ENCODE measurements at regions of chr2 and their contacts with region 1.

Region 1: GRCh38 chr2:216519154-216519762 is 20.6 kb downstream of the RPL37A start:
- H3K4me3 ChIP-seq: no peak overlapping the region
- H3K27ac ChIP-seq: no peak overlapping the region
- H3K4me1 ChIP-seq: no peaks in the 10 kb centered on the region
- CTCF ChIP-seq: peak; percentile 56; the same call in 1 of the 2 replicates

Region 2: DNA sequence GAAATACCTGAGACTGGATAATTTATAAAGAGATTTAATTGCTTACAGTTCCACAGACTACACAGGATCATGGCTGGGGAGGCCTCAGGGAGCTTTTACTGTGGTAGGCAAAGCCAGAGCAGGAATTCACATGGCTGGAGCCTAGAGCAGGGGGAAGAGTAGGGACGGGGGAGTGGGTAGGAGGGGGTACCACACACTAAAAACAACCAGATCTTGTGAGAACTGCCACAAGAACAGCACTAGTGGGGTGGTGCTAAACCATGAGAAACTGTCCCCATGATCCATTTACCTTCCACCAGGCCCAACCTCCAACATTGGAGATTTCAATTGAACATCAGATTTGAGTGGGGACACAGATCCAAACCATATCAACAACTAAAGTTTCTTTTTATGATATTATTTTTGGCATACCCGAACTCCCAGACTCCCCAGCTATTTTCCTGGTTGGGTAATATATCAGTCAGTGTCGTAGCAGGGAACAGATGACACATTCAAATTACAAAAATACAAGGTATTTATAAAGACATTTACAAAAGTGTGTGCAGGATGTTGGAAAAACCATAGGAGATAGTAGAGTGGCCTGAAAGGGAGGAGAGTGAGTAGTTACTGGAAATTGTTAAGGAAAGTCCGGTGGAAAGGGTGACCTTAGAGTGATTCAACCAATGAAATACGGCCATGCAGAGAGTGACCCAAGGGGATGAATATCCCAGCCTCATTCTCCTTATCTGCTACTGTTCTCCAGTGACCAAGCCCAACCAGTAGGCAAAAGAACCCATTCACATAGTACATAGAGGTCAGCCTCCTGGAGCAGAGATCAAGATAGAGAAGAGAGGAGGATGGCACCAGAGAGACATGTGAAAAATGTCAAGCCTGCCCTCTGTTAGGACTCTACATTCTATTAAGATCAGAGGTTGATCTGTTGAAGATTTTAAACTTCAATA is 11.8 kb before region 1 on chr2:
- CTCF ChIA-PET with region 1: interaction called, 12 read pairs
- POLR2A ChIA-PET with region 1: interaction called, 7 read pairs
- H3K4me3 ChIP-seq: no peak overlapping the region
- H3K27ac ChIP-seq: no peak overlapping the region
- H3K4me1 ChIP-seq: no peaks in the 10 kb centered on the region
- CTCF ChIP-seq: no peak

Region 3: GRCh38 chr2:216533609-216534008 is 14.4 kb after region 1 on chr2:
- CTCF ChIA-PET with region 1: interaction called, 22 read pairs
- POLR2A ChIA-PET with region 1: no interaction called
- H3K4me3 ChIP-seq: no peak overlapping the region
- H3K27ac ChIP-seq: no peak overlapping the region
- H3K4me1 ChIP-seq: peaks cover 5% of the 10 kb centered on the region; the same call in 1 of the 2 replicates
- CTCF ChIP-seq: no peak

Region 4: GRCh38 chr2:216648105-216648504 is 128.8 kb after region 1 on chr2:
- CTCF ChIA-PET with region 1: interaction called, 14 read pairs
- POLR2A ChIA-PET with region 1: no interaction called
- H3K4me3 ChIP-seq: no peak overlapping the region
- H3K27ac ChIP-seq: no peak overlapping the region
- H3K4me1 ChIP-seq: no peaks in the 10 kb centered on the region
- CTCF ChIP-seq: no peak

Region 5: GRCh38 chr2:216666461-216667233 is 147.4 kb after region 1 on chr2:
- CTCF ChIA-PET with region 1: interaction called, 376 read pairs
- POLR2A ChIA-PET with region 1: no interaction called
- H3K4me3 ChIP-seq: no peak overlapping the region
- H3K27ac ChIP-seq: no peak overlapping the region
- H3K4me1 ChIP-seq: no peaks in the 10 kb centered on the region
- CTCF ChIP-seq: peak; percentile 87

Region 6: GRCh38 chr2:216680951-216681629 is 161.8 kb after region 1 on chr2:
- CTCF ChIA-PET with region 1: interaction called, 10 read pairs
- POLR2A ChIA-PET with region 1: no interaction called
- H3K4me3 ChIP-seq: no peak overlapping the region
- H3K27ac ChIP-seq: no peak overlapping the region
- H3K4me1 ChIP-seq: peaks cover 5% of the 10 kb centered on the region
- CTCF ChIP-seq: no peak